ENCODE measurements at regions of chr14 and their contacts with region 1.

Region 1: DNA sequence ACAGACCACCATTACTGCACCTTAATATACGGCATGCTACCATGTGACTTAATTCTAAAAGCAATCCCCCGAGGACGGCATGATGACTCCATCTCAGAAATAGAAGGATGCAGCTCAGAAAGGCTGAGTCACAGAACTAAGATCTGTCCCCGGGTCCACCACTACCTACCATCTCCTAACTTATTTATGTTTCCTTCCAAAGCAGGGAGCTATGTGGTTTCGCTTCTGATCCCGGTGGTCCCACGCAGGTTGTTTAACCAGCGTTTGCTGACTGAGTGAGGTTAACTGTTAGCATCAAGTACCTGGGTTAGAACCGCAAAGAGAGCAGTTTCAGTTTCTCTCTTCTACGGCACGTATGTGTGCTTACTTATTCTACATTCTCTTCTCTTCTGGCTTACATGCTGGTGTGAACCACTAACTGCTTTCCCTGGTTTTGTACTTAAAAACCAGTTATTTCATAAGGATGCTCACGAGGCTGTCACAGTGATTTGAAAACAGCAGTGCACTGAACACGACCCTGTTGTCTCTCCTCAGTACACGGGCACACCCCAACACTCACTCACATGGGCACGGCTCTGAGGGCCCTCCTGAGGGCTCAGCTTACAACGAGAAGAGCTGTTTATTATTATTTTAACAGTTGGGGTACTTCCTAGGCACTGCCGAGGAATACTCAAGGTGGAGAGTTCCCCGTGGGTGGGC is 66.7 kb downstream of the CCDC88C start:
- DNase-seq: peak in 8 of 9 donors; percentile 55 to 82 (median 72)
- ATAC-seq: peak; percentile 75
- H3K4me3 ChIP-seq: peak overlapping the region; percentile 31
- H3K4me3 Mint-ChIP-seq: peak overlapping the region; percentile 80 to 97 (median 89)
- H3K27ac ChIP-seq: peak overlapping the region; percentile 75
- H3K27ac Mint-ChIP-seq: peak overlapping the region; percentile 86 to 98 (median 95)
- H3K4me1 ChIP-seq: peaks cover 71 to 77% of the 10 kb centered on the region in 2 donors
- H3K4me1 Mint-ChIP-seq: peaks cover 78 to 97% (median 89%) of the 10 kb centered on the region in 7 donors
- H3K27me3 ChIP-seq: no peaks in the 10 kb centered on the region
- H3K27me3 Mint-ChIP-seq: no peaks in the 10 kb centered on the region

Region 2: GRCh38 chr14:90599748-90600507 is 751.0 kb before region 1 on chr14:
- CTCF ChIA-PET with region 1: no interaction called
- POLR2A ChIA-PET with region 1: no interaction called
- intact Hi-C with region 1: no loop called
- DNase-seq: no peak
- ATAC-seq: no peak
- H3K4me3 ChIP-seq: no peak overlapping the region
- H3K4me3 Mint-ChIP-seq: no peak overlapping the region
- H3K27ac ChIP-seq: no peak overlapping the region
- H3K27ac Mint-ChIP-seq: no peak overlapping the region
- H3K4me1 ChIP-seq: no peaks in the 10 kb centered on the region
- H3K4me1 Mint-ChIP-seq: no peaks in the 10 kb centered on the region
- H3K27me3 ChIP-seq: no peaks in the 10 kb centered on the region
- H3K27me3 Mint-ChIP-seq: peaks cover 4 to 15% (median 14%) of the 10 kb centered on the region in 5 donors

Region 3: GRCh38 chr14:91317381-91318308 is 33.3 kb before region 1 on chr14:
- CTCF ChIA-PET with region 1: no interaction called
- POLR2A ChIA-PET with region 1: interaction called, 6 read pairs
- intact Hi-C with region 1: loop called in 1 of 2 experiments (anchors 1 kb)
- DNase-seq: peak; percentile 58 to 86 (median 84)
- ATAC-seq: peak; percentile 60
- H3K4me3 ChIP-seq: peak overlapping the region; percentile 39
- H3K4me3 Mint-ChIP-seq: peak overlapping the region; percentile 73 to 88 (median 81)
- H3K27ac ChIP-seq: peak overlapping the region; percentile 82
- H3K27ac Mint-ChIP-seq: peak overlapping the region; percentile 93 to 99 (median 98)
- H3K4me1 ChIP-seq: peaks cover 58 to 61% of the 10 kb centered on the region in 2 donors
- H3K4me1 Mint-ChIP-seq: peaks cover 55 to 88% (median 70%) of the 10 kb centered on the region in 7 donors
- H3K27me3 ChIP-seq: no peaks in the 10 kb centered on the region
- H3K27me3 Mint-ChIP-seq: no peaks in the 10 kb centered on the region

Region 4: GRCh38 chr14:91367173-91368171 is 16.5 kb after region 1 on chr14:
- CTCF ChIA-PET with region 1: interaction called, 5 read pairs
- POLR2A ChIA-PET with region 1: interaction called, 13 read pairs
- intact Hi-C with region 1: loop called (anchors 1 to 2 kb)
- DNase-seq: peak in 8 of 9 donors; percentile 40 to 90 (median 60)
- ATAC-seq: peak; percentile 86
- H3K4me3 ChIP-seq: peak overlapping the region; percentile 23
- H3K4me3 Mint-ChIP-seq: peak overlapping the region; percentile 69 to 89 (median 82)
- H3K27ac ChIP-seq: peak overlapping the region; percentile 80
- H3K27ac Mint-ChIP-seq: peak overlapping the region; percentile 71 to 97 (median 93)
- H3K4me1 ChIP-seq: peaks cover 86 to 88% of the 10 kb centered on the region in 2 donors
- H3K4me1 Mint-ChIP-seq: peaks cover 65 to 97% (median 87%) of the 10 kb centered on the region in 7 donors
- H3K27me3 ChIP-seq: no peaks in the 10 kb centered on the region
- H3K27me3 Mint-ChIP-seq: no peaks in the 10 kb centered on the region

Region 5: GRCh38 chr14:91373591-91374254 is 22.8 kb after region 1 on chr14:
- CTCF ChIA-PET with region 1: interaction called, 9 read pairs
- POLR2A ChIA-PET with region 1: interaction called, 11 read pairs
- intact Hi-C with region 1: loop called (anchors 1 to 2 kb)
- DNase-seq: peak in 6 of 9 donors; percentile 42 to 61 (median 56)
- ATAC-seq: peak; percentile 59
- H3K4me3 ChIP-seq: peak overlapping the region; percentile 61
- H3K4me3 Mint-ChIP-seq: peak overlapping the region; percentile 79 to 89 (median 86)
- H3K27ac ChIP-seq: peak overlapping the region; percentile 72
- H3K27ac Mint-ChIP-seq: peak overlapping the region; percentile 89 to 99 (median 97)
- H3K4me1 ChIP-seq: peaks cover 94 to 98% of the 10 kb centered on the region in 2 donors
- H3K4me1 Mint-ChIP-seq: peaks cover 84 to 100% (median 98%) of the 10 kb centered on the region in 7 donors
- H3K27me3 ChIP-seq: no peaks in the 10 kb centered on the region
- H3K27me3 Mint-ChIP-seq: no peaks in the 10 kb centered on the region

Region 6: DNA sequence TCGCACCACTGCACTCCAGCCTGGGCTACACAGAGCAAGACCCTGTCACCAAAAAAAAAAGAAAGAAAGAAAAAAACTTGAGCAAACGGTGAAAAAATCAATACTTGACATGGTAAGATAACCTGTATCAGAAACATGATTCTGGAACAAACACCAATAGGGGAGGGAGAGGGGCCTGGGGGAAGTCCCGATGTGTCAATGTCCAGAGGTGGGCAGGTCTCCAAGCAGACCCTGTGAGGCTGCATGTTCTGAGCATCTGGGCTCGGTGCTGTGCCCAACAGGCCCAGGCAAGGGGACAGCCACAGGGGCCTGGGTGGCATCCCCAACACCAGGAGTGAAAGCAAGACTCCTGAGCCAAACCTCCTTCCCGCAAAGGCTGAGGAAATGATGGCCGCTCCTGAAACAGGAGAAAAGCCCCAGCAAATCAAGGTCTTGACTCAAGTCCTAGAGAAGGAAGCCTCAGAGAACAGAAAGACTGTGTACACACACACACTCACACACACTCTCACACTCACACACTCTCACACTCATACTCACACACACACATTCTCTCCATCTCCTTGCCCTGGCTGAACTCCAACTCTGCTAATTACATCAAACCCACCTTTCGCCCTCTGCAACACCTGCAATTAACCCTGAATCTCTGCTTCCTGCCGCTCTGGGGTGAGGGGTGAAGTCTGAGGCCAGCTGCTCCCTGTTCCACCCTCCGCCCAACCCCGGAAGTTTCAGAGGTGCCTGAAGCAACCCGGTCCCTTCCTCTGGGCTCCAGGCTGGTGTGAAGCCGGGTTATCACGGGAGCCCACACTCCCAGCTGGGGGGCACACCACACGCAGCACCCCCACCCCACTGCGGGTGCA is 46.2 kb after region 1 on chr14:
- CTCF ChIA-PET with region 1: interaction called, 3 read pairs
- POLR2A ChIA-PET with region 1: interaction called, 15 read pairs
- intact Hi-C with region 1: loop called in 1 of 2 experiments (anchors 2 kb)
- DNase-seq: peak in 8 of 9 donors; percentile 61 to 77 (median 71)
- ATAC-seq: peak; percentile 68
- H3K4me3 ChIP-seq: peak overlapping the region; percentile 43
- H3K4me3 Mint-ChIP-seq: peak overlapping the region; percentile 73 to 99 (median 86)
- H3K27ac ChIP-seq: peak overlapping the region; percentile 76
- H3K27ac Mint-ChIP-seq: peak overlapping the region; percentile 77 to 99 (median 89)
- H3K4me1 ChIP-seq: peaks cover 88 to 90% of the 10 kb centered on the region in 2 donors
- H3K4me1 Mint-ChIP-seq: peaks cover 80 to 98% (median 91%) of the 10 kb centered on the region in 7 donors
- H3K27me3 ChIP-seq: no peaks in the 10 kb centered on the region
- H3K27me3 Mint-ChIP-seq: no peaks in the 10 kb centered on the region

Region 7: GRCh38 chr14:91410771-91411536 is 60.0 kb after region 1 on chr14:
- CTCF ChIA-PET with region 1: interaction called, 4 read pairs
- POLR2A ChIA-PET with region 1: interaction called, 150 read pairs
- intact Hi-C with region 1: loop called (anchors 1 kb)
- DNase-seq: peak in 1 of 9 donors; percentile 18
- ATAC-seq: no peak
- H3K4me3 ChIP-seq: peak overlapping the region; percentile 11
- H3K4me3 Mint-ChIP-seq: peak overlapping the region; percentile 76 to 100 (median 85)
- H3K27ac ChIP-seq: peak overlapping the region; percentile 95
- H3K27ac Mint-ChIP-seq: peak overlapping the region; percentile 89 to 99 (median 95)
- H3K4me1 ChIP-seq: peaks cover 80 to 86% of the 10 kb centered on the region in 2 donors
- H3K4me1 Mint-ChIP-seq: peaks cover 69 to 94% (median 89%) of the 10 kb centered on the region in 7 donors
- H3K27me3 ChIP-seq: no peaks in the 10 kb centered on the region
- H3K27me3 Mint-ChIP-seq: no peaks in the 10 kb centered on the region

Region 8: DNA sequence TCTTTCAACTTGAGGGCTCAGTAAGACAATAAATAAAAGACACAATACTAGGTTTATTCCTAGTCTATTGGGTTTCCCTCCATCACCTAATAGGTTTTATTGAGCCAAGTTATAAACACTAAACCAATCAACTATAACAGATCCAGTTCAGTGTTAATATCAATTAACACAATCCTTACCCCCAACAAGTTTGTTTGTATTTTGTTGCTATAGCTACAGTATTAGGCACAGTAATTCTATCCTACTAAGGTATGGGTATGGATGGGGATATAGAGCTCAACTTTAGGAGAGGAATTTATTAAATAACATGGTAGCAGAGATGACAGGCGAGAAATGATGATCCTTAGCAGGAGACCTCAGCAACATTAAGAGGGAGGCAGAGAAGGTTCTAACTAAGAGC is 145.8 kb after region 1 on chr14:
- CTCF ChIA-PET with region 1: no interaction called
- POLR2A ChIA-PET with region 1: no interaction called
- intact Hi-C with region 1: no loop called
- DNase-seq: no peak
- ATAC-seq: no peak
- H3K4me3 ChIP-seq: no peak overlapping the region
- H3K4me3 Mint-ChIP-seq: peak overlapping the region; percentile 40 to 88 (median 67)
- H3K27ac ChIP-seq: peak overlapping the region; percentile 34
- H3K27ac Mint-ChIP-seq: peak overlapping the region; percentile 30 to 90 (median 75)
- H3K4me1 ChIP-seq: peaks cover 47 to 60% of the 10 kb centered on the region in 2 donors
- H3K4me1 Mint-ChIP-seq: peaks cover 61 to 94% (median 76%) of the 10 kb centered on the region in 7 donors
- H3K27me3 ChIP-seq: no peaks in the 10 kb centered on the region
- H3K27me3 Mint-ChIP-seq: no peaks in the 10 kb centered on the region

Region 9: DNA sequence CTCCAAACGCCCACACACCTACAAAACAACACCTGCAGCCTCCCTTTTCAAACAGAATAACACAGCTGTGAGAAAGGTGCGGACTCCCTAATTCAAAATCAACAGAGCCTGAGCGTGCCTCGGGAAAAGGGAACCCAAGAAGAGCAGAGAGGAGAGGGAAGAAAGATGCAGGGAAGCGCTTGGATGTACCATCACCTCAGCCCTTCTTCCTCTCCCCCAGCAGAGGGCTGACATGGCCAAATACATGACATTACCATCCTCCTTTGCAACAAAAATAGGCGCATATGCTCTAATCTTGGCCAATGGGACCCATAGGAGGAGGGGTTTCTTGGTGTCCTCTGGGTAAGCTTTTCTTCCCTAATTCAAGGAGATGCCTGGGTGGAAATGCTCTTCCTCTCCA is 848.8 kb after region 1 on chr14:
- CTCF ChIA-PET with region 1: no interaction called
- POLR2A ChIA-PET with region 1: no interaction called
- intact Hi-C with region 1: no loop called
- DNase-seq: no peak
- ATAC-seq: no peak
- H3K4me3 ChIP-seq: no peak overlapping the region
- H3K4me3 Mint-ChIP-seq: no peak overlapping the region
- H3K27ac ChIP-seq: no peak overlapping the region
- H3K27ac Mint-ChIP-seq: no peak overlapping the region
- H3K4me1 ChIP-seq: no peaks in the 10 kb centered on the region
- H3K4me1 Mint-ChIP-seq: peaks cover 0 to 6% (median 0%) of the 10 kb centered on the region in 7 donors
- H3K27me3 ChIP-seq: no peaks in the 10 kb centered on the region
- H3K27me3 Mint-ChIP-seq: peaks cover 4 to 19% (median 7%) of the 10 kb centered on the region in 5 donors